Activated CD4-positive, alpha-beta T cell treated with anti-CD3 and anti-CD28 coated beads, Interleukin-2, amount 10 ng/mL, durations not matched to agents 7 days and 5 days (primary cell): ENCODE measurements at regions of chr4 and their contacts with region 1.

Region 1: GRCh38 chr4:88284439-88285234 is at the start of gene PPM1K:
- DNase-seq: peak; percentile 99
- H3K4me3 Mint-ChIP-seq: peak within 1 kb of the TSS; percentile 96
- H3K27ac Mint-ChIP-seq: peak within 1 kb of the TSS; percentile 100
- H3K4me1 Mint-ChIP-seq: peaks cover 38% of the 10 kb centered on the region
- H3K27me3 Mint-ChIP-seq: no peaks in the 10 kb centered on the region
- total RNA-seq, gene PPM1K: 58.4 to 68.5 TPM

Region 2: GRCh38 chr4:88456757-88457306 is 172.2 kb after region 1 on chr4 and contains the start of gene HERC5:
- CTCF ChIA-PET with region 1: interaction called, 6 read pairs
- POLR2A ChIA-PET with region 1: interaction called, 10 read pairs
- DNase-seq: peak; percentile 95
- H3K4me3 Mint-ChIP-seq: peak within 1 kb of the TSS; percentile 99
- H3K27ac Mint-ChIP-seq: peak within 1 kb of the TSS; percentile 100
- H3K4me1 Mint-ChIP-seq: peaks cover 51% of the 10 kb centered on the region
- H3K27me3 Mint-ChIP-seq: no peaks in the 10 kb centered on the region
- total RNA-seq, gene HERC5: 47.8 to 49.2 TPM

Region 3: GRCh38 chr4:90012918-90013317 is 1728.3 kb after region 1 on chr4:
- CTCF ChIA-PET with region 1: no interaction called
- POLR2A ChIA-PET with region 1: no interaction called
- DNase-seq: no peak
- H3K4me3 Mint-ChIP-seq: no peak overlapping the region
- H3K27ac Mint-ChIP-seq: no peak overlapping the region
- H3K4me1 Mint-ChIP-seq: no peaks in the 10 kb centered on the region
- H3K27me3 Mint-ChIP-seq: no peaks in the 10 kb centered on the region